ENCODE measurements at regions of chr14 and their contacts with region 1.

Region 1: DNA sequence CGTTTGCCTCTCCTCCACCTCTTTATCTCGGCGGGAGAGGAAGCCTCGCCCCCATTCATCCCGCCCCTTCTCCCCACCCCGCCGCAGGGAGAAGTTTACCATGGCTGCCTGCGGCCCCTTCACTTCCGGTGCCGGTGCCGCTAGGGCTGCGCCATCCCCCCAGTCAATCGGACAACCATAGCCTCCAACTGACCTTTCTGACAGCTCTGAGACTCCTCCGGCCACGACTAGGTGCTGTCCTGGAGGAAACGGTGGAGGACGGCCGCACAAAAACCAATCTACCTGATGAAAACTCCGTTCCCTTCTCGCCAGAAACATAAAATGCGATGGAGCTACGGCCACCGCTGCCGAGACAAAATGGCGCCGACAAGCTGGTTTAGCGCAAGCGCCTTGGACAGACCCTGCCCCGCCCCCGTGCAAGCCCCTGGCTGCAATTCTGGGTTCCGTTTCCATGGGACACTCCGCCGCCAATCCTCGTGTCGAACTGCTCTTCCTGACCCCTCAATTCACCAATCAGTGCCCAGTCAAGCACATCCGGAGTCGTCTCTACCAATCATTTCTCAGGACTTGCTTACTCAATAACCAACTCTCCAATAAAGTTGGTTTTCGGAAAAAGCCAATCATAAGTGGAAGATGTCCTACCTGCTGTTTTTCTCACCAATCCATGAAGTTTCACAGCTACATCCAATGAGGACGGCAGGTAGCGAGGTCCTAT is 436 bp upstream of the ARID4A start:
- DNase-seq: peak; percentile 100
- ATAC-seq: peak; percentile 94
- H3K4me3 ChIP-seq: peak overlapping the region; percentile 83 to 95 (median 86)
- H3K27ac ChIP-seq: peak overlapping the region; percentile 96
- H3K4me1 ChIP-seq: peaks cover 44% of the 10 kb centered on the region
- H3K27me3 ChIP-seq: no peaks in the 10 kb centered on the region; a peak in 1 of 5 replicates
- CTCF ChIP-seq: peak; percentile 41
- EP300 ChIP-seq: peak in 1 of 2 experiments; percentile 54; a peak in 1 of 4 replicates
- POLR2A ChIP-seq: peak; percentile 70 to 79; a peak in 3 of 4 replicates
- RAD21 ChIP-seq: no peak

Region 2: GRCh38 chr14:58027909-58028308 is 270.0 kb before region 1 on chr14:
- CTCF ChIA-PET with region 1: no interaction called
- POLR2A ChIA-PET with region 1: no interaction called
- in situ Hi-C with region 1: no loop called
- intact Hi-C with region 1: no loop called
- DNase-seq: no peak
- ATAC-seq: no peak
- H3K4me3 ChIP-seq: no peak overlapping the region
- H3K27ac ChIP-seq: no peak overlapping the region
- H3K4me1 ChIP-seq: no peaks in the 10 kb centered on the region
- H3K27me3 ChIP-seq: no peaks in the 10 kb centered on the region
- CTCF ChIP-seq: no peak
- EP300 ChIP-seq: no peak
- POLR2A ChIP-seq: no peak
- RAD21 ChIP-seq: no peak

Region 3: GRCh38 chr14:58244556-58245387 is 53.1 kb before region 1 on chr14 and contains the start of gene PSMA3:
- CTCF ChIA-PET with region 1: no interaction called
- POLR2A ChIA-PET with region 1: interaction called, 56 read pairs
- in situ Hi-C with region 1: no loop called
- intact Hi-C with region 1: loop called (anchors 1 kb)
- DNase-seq: peak; percentile 96
- ATAC-seq: peak; percentile 94
- H3K4me3 ChIP-seq: peak within 1 kb of the TSS; percentile 66 to 100 (median 93)
- H3K27ac ChIP-seq: peak within 1 kb of the TSS; percentile 99
- H3K4me1 ChIP-seq: peaks cover 39% of the 10 kb centered on the region
- H3K27me3 ChIP-seq: no peaks in the 10 kb centered on the region; a peak in 1 of 5 replicates
- CTCF ChIP-seq: no peak
- EP300 ChIP-seq: no peak
- POLR2A ChIP-seq: peak; percentile 77 to 95
- RAD21 ChIP-seq: no peak
- total RNA-seq, gene PSMA3: 275 and 443 TPM in 2 replicates

Region 4: GRCh38 chr14:58287607-58288042 is 10.3 kb before region 1 on chr14:
- CTCF ChIA-PET with region 1: no interaction called
- POLR2A ChIA-PET with region 1: interaction called, 57 read pairs
- in situ Hi-C with region 1: no loop called
- intact Hi-C with region 1: no loop called
- DNase-seq: peak; percentile 94
- ATAC-seq: peak; percentile 88
- H3K4me3 ChIP-seq: peak overlapping the region in 1 of 3 experiments; percentile 34; a peak in 1 of 6 replicates
- H3K27ac ChIP-seq: peak overlapping the region; percentile 68
- H3K4me1 ChIP-seq: peaks cover 79% of the 10 kb centered on the region
- H3K27me3 ChIP-seq: no peaks in the 10 kb centered on the region
- CTCF ChIP-seq: no peak
- EP300 ChIP-seq: peak; percentile 18 to 85; a peak in 2 of 4 replicates
- POLR2A ChIP-seq: no peak
- RAD21 ChIP-seq: 0 out of 2 replicates have a peak, but pooled peaks have one; percentile 27

Region 5: GRCh38 chr14:58331111-58331510 is 33.2 kb after region 1 on chr14:
- CTCF ChIA-PET with region 1: no interaction called
- POLR2A ChIA-PET with region 1: interaction called, 4 read pairs
- in situ Hi-C with region 1: no loop called
- intact Hi-C with region 1: loop called (anchors 5 kb)
- DNase-seq: peak; percentile 91
- ATAC-seq: peak; percentile 68
- H3K4me3 ChIP-seq: no peak overlapping the region
- H3K27ac ChIP-seq: peak overlapping the region; percentile 53
- H3K4me1 ChIP-seq: peaks cover 16% of the 10 kb centered on the region
- H3K27me3 ChIP-seq: no peaks in the 10 kb centered on the region
- CTCF ChIP-seq: no peak
- EP300 ChIP-seq: no peak
- POLR2A ChIP-seq: no peak
- RAD21 ChIP-seq: no peak

Region 6: GRCh38 chr14:58427281-58428117 is 129.6 kb after region 1 on chr14 and contains the starts of genes KIAA0586 and TIMM9:
- CTCF ChIA-PET with region 1: no interaction called
- POLR2A ChIA-PET with region 1: interaction called, 10 read pairs
- in situ Hi-C with region 1: no loop called
- intact Hi-C with region 1: no loop called
- DNase-seq: peak; percentile 97
- ATAC-seq: peak; percentile 93
- H3K4me3 ChIP-seq: peak within 1 kb of the TSS; percentile 82 to 84 (median 83)
- H3K27ac ChIP-seq: peak within 1 kb of the TSS; percentile 96
- H3K4me1 ChIP-seq: peaks cover 40% of the 10 kb centered on the region
- H3K27me3 ChIP-seq: no peaks in the 10 kb centered on the region; a peak in 1 of 5 replicates
- CTCF ChIP-seq: no peak
- EP300 ChIP-seq: peak in 1 of 2 experiments; percentile 56; a peak in 2 of 4 replicates
- POLR2A ChIP-seq: peak; percentile 92
- RAD21 ChIP-seq: 0 out of 2 replicates have a peak, but pooled peaks have one; percentile 20
- total RNA-seq, gene KIAA0586: 25.2 and 37.6 TPM in 2 replicates
- total RNA-seq, gene TIMM9: 42.5 and 58.2 TPM in 2 replicates